Activated CD8-positive, alpha-beta memory T cell treated with anti-CD3 and anti-CD28 coated beads, Interleukin-2, amount 10 ng/mL, durations not matched to agents 7 days and 5 days (primary cell): ENCODE measurements at regions of chr10 and their contacts with region 1.

Region 1: DNA sequence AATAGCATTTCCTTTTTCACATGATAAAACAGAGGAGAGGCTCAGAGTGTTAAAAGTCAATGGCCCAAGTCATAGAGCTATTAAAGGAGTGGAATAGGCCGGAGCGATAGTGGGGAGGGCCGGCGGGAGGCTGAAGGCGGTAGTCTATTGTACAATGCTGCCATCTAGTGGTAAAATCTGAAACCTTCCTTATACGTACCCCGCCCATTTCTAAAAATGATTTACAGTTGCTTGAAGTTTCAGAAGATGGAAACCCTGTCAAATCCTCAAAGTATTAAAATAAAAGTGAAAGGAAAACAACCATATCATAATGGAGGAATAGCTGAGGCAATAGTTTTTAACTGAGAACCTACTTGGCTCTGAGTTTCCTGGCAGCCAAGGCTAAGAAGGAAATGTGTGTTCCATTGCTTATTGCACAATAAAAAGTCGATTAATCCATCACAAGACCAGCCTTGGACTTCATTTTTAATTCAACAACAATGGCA is 209.1 kb downstream of the CCSER2 start:
- DNase-seq: no peak
- ATAC-seq: peak; percentile 63
- H3K4me3 Mint-ChIP-seq: no peak overlapping the region
- H3K27ac Mint-ChIP-seq: no peak overlapping the region
- H3K4me1 Mint-ChIP-seq: peaks cover 15% of the 10 kb centered on the region
- H3K27me3 Mint-ChIP-seq: peaks cover 15% of the 10 kb centered on the region

Region 2: GRCh38 chr10:84264611-84265141 is 272.8 kb before region 1 on chr10:
- CTCF ChIA-PET with region 1: interaction called, 238 read pairs
- DNase-seq: peak; percentile 79
- ATAC-seq: peak; percentile 90
- H3K4me3 Mint-ChIP-seq: no peak overlapping the region
- H3K27ac Mint-ChIP-seq: no peak overlapping the region
- H3K4me1 Mint-ChIP-seq: peaks cover 19% of the 10 kb centered on the region
- H3K27me3 Mint-ChIP-seq: peaks cover 42% of the 10 kb centered on the region

Region 3: DNA sequence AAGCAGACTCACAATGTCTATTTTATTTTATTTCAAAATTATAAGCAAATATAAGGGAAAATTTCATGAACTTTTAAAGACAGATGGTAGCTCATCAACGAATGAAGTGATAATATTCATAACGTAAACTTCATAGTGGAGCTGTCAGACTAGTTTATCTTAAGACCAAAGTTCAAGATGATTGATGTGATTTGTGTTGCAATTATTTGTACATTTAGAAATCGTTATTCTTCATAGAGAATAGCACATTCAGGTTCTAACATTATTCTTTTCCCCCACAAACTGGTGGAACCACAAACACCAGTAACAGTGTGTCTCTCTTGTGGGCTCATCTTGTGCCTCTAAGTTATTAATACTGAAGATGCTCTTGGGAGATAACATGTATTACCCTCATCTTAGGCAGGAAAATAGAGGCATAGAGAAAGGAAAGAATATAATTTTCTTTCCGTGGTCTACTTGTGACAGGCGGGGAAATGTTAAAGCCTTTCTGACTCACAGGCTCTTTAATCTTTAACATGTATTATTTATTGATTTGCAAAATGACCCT is 172.1 kb before region 1 on chr10:
- CTCF ChIA-PET with region 1: interaction called, 59 read pairs
- DNase-seq: no peak
- ATAC-seq: no peak
- H3K4me3 Mint-ChIP-seq: no peak overlapping the region
- H3K27ac Mint-ChIP-seq: no peak overlapping the region
- H3K4me1 Mint-ChIP-seq: peaks cover 35% of the 10 kb centered on the region
- H3K27me3 Mint-ChIP-seq: no peaks in the 10 kb centered on the region

Region 4: GRCh38 chr10:84424731-84425167 is 112.7 kb before region 1 on chr10:
- CTCF ChIA-PET with region 1: interaction called, 48 read pairs
- DNase-seq: peak; percentile 55
- ATAC-seq: peak; percentile 80
- H3K4me3 Mint-ChIP-seq: peak overlapping the region; percentile 7
- H3K27ac Mint-ChIP-seq: peak overlapping the region; percentile 66
- H3K4me1 Mint-ChIP-seq: peaks cover 13% of the 10 kb centered on the region
- H3K27me3 Mint-ChIP-seq: no peaks in the 10 kb centered on the region

Region 5: DNA sequence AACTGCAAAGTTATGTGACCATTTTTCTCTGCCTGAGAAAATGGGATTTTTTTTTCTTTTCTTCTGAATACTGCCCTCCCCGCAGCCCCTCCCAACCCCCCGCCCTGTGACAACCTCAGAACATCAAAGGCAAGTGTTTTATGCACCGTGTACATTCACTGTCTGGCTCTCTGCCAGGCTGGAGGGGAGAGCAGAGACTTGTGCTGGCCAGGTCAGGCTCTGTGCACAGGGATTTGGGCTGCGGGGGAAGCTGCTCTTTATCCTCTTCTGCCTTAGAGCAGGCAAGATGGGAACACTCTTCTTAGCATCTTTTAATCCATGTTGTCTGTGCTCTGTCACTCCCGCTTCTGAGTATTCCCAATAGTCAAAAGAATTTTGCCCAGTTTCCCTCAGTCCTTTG is 14.0 kb before region 1 on chr10:
- CTCF ChIA-PET with region 1: interaction called, 12 read pairs
- DNase-seq: no peak
- ATAC-seq: no peak
- H3K4me3 Mint-ChIP-seq: no peak overlapping the region
- H3K27ac Mint-ChIP-seq: no peak overlapping the region
- H3K4me1 Mint-ChIP-seq: peaks cover 2% of the 10 kb centered on the region
- H3K27me3 Mint-ChIP-seq: no peaks in the 10 kb centered on the region

Region 6: GRCh38 chr10:84590327-84591193 is 53.1 kb after region 1 on chr10:
- CTCF ChIA-PET with region 1: no interaction called
- DNase-seq: no peak
- ATAC-seq: no peak
- H3K4me3 Mint-ChIP-seq: no peak overlapping the region
- H3K27ac Mint-ChIP-seq: no peak overlapping the region
- H3K4me1 Mint-ChIP-seq: no peaks in the 10 kb centered on the region
- H3K27me3 Mint-ChIP-seq: no peaks in the 10 kb centered on the region

Region 7: GRCh38 chr10:85008488-85009184 is 471.1 kb after region 1 on chr10:
- CTCF ChIA-PET with region 1: no interaction called
- DNase-seq: no peak
- ATAC-seq: no peak
- H3K4me3 Mint-ChIP-seq: no peak overlapping the region
- H3K27ac Mint-ChIP-seq: no peak overlapping the region
- H3K4me1 Mint-ChIP-seq: no peaks in the 10 kb centered on the region
- H3K27me3 Mint-ChIP-seq: no peaks in the 10 kb centered on the region